Sciatic nerve (tissue), 2 donors: ENCODE measurements at regions of chr22 and their contacts with region 1.

Region 1: GRCh38 chr22:37601540-37602442 is 6.8 kb upstream of the GGA1 start:
- DNase-seq: no peak
- ATAC-seq: no peak

Region 2: DNA sequence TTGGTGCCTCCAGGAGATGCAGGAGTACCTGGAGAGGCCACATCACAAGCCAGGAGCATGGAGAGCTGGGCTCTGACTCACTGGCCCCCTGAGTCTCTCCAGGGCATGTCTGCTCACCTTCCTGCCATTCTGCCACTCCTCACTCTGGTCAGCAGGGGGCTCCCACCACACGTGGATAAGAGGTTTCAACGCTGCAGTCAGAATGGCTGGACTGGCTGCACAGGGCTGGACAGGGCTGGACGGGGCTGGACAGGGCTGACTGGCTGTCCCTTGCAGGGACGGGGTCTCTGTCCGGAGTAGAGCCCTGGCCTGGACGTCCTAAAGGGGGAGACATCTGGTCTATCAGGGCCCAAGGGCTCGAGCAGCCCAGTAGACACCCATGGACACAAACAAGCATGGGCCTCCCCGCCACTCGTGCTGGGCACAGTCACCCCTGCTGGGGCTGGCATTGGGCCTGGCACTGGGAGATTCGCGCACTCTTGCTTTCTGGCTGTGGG is 284.9 kb before region 1 on chr22:
- intact Hi-C with region 1: loop called (anchors 10 kb)
- DNase-seq: peak; percentile 86
- ATAC-seq: peak; percentile 90

Region 3: GRCh38 chr22:37403267-37403960 is 198.4 kb before region 1 on chr22:
- intact Hi-C with region 1: no loop called
- DNase-seq: no peak
- ATAC-seq: no peak

Region 4: GRCh38 chr22:37484133-37484824 is 117.5 kb before region 1 on chr22:
- intact Hi-C with region 1: no loop called
- DNase-seq: peak; percentile 84
- ATAC-seq: peak; percentile 64

Region 5: GRCh38 chr22:37544955-37545699 is 56.7 kb before region 1 on chr22:
- intact Hi-C with region 1: loop called (anchors 10 kb)
- DNase-seq: peak; percentile 85
- ATAC-seq: peak; percentile 59

Region 6: DNA sequence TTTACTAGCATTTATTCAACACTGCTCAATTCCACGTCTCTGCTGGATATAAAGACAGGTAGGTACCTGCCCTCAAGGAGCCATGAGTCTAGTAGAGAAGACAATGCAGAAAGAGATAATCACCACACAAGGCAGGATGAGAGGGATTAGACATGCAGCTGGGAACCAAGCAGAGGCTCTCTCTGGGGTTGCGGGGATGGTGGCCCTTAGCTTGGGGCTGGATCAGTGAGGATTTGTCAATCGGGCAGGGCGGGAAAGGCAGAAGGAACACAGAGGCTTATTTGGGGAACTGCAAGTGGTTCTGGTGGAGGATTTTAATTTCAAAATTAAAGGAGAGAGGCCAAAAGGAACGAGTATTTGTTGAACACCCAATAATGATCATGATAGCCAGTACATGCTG is 976.7 kb after region 1 on chr22:
- intact Hi-C with region 1: loop called (anchors 5 kb)
- DNase-seq: no peak
- ATAC-seq: no peak